ENCODE measurements at regions of chr4 and their contacts with region 1.

Region 1: GRCh38 chr4:163554870-163555465 is 60.5 kb downstream of the TMA16 start:
- DNase-seq: no peak
- H3K4me3 Mint-ChIP-seq: no peak overlapping the region
- H3K27ac Mint-ChIP-seq: no peak overlapping the region
- H3K4me1 Mint-ChIP-seq: peaks cover 16% of the 10 kb centered on the region
- H3K27me3 Mint-ChIP-seq: peaks cover 2% of the 10 kb centered on the region

Region 2: GRCh38 chr4:163494360-163495162 is 60.4 kb before region 1 on chr4 and contains the start of gene TMA16:
- intact Hi-C with region 1: loop called (anchors 1 kb)
- DNase-seq: peak; percentile 96
- H3K4me3 Mint-ChIP-seq: peak within 1 kb of the TSS; percentile 96
- H3K27ac Mint-ChIP-seq: peak within 1 kb of the TSS; percentile 100
- H3K4me1 Mint-ChIP-seq: peaks cover 22% of the 10 kb centered on the region
- H3K27me3 Mint-ChIP-seq: peaks cover 15% of the 10 kb centered on the region
- total RNA-seq, gene TMA16: 82.3 and 83.9 TPM in 2 replicates

Region 3: DNA sequence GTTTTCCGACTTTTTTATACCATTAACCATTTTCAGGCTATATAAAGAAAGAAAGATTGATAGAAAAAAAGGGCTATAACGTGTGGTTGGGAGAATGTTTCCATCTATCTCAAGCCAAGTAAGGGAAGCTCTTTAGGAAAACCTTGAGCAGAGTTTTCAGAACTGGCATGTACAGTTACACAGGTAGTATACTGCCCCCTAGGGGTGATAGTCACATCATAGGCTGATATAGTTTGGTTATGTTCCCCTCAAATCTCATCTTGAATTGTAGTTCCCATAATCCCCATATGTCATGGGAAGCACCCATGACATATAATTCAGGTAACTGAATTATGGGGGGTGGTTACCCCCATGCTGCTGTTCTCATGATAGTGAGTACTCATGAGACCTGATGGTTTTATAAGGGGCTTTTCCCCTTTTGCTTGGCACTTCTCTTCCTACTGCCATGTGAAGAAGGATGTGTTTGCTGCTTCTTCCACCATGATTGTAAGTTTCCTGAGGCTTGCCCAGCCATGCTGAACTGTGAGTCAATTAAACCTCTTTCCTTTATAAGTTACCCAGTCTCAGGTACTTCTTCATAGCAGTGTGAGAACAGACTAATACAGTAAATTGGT is 126.3 kb after region 1 on chr4:
- intact Hi-C with region 1: loop called (anchors 1 kb)
- DNase-seq: peak; percentile 79
- H3K4me3 Mint-ChIP-seq: no peak overlapping the region
- H3K27ac Mint-ChIP-seq: no peak overlapping the region
- H3K4me1 Mint-ChIP-seq: no peaks in the 10 kb centered on the region
- H3K27me3 Mint-ChIP-seq: no peaks in the 10 kb centered on the region

Region 4: GRCh38 chr4:163755013-163755412 is 200.0 kb after region 1 on chr4:
- intact Hi-C with region 1: loop called (anchors 5 kb)
- DNase-seq: no peak
- H3K4me3 Mint-ChIP-seq: no peak overlapping the region
- H3K27ac Mint-ChIP-seq: no peak overlapping the region
- H3K4me1 Mint-ChIP-seq: no peaks in the 10 kb centered on the region
- H3K27me3 Mint-ChIP-seq: peaks cover 1% of the 10 kb centered on the region

Region 5: DNA sequence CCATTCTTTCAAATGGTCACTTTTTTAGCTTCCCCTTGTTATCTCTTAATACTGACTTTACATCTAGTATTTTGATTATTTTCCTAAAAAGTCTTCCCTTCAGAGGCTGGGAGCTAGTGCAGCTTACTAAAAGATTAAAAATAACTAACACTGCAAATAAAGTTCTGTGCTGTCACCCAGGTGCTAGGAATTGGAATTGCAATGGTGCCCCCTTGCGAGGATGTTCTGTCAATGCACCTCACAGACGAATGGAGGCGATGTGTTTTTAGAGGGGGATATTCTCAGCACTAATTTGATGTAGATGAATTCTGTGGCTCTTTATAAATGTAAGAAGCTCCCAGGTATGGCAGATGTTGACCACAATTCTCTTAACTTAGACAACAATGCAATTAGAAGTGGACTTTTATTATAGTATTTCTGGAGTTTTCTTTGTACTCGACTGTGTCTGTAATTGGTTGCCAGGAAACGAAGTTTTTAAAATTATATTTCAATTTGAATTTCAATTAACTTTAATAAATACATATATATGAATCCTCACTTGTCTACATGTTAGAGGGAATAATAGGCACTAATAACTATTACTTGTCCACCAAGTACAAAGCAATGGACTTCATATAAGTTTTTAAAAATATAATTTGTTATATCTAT is 1177.0 kb after region 1 on chr4:
- intact Hi-C with region 1: loop called (anchors 2 kb)
- DNase-seq: peak; percentile 82
- H3K4me3 Mint-ChIP-seq: no peak overlapping the region
- H3K27ac Mint-ChIP-seq: no peak overlapping the region
- H3K4me1 Mint-ChIP-seq: peaks cover 3% of the 10 kb centered on the region
- H3K27me3 Mint-ChIP-seq: peaks cover 5% of the 10 kb centered on the region

Region 6: DNA sequence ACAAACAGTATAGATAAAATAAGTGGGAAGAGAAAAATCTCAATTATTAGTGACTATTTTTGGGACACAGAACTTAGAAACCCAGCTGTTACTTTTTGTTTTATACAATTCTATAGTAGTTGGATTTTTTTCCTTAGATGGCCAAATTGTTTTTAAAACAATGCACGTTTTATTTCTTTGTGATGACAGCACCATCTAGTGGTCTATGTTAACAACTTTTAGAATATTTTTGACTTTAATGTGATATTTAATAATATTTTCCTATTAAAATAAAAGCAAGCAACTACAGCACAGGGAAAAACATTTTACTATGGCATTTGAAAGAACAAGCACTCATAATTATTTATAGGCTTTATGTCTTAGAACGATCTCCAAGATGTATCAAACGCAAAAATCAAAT is 1193.4 kb after region 1 on chr4:
- intact Hi-C with region 1: loop called (anchors 5 kb)
- DNase-seq: no peak
- H3K4me3 Mint-ChIP-seq: no peak overlapping the region
- H3K27ac Mint-ChIP-seq: no peak overlapping the region
- H3K4me1 Mint-ChIP-seq: no peaks in the 10 kb centered on the region
- H3K27me3 Mint-ChIP-seq: no peaks in the 10 kb centered on the region

Region 7: GRCh38 chr4:165096776-165097175 is 1541.8 kb after region 1 on chr4:
- intact Hi-C with region 1: loop called (anchors 10 kb)
- DNase-seq: no peak
- H3K4me3 Mint-ChIP-seq: no peak overlapping the region
- H3K27ac Mint-ChIP-seq: no peak overlapping the region
- H3K4me1 Mint-ChIP-seq: no peaks in the 10 kb centered on the region
- H3K27me3 Mint-ChIP-seq: no peaks in the 10 kb centered on the region